ENCODE measurements at regions of chr5 and their contacts with region 1.

Region 1: DNA sequence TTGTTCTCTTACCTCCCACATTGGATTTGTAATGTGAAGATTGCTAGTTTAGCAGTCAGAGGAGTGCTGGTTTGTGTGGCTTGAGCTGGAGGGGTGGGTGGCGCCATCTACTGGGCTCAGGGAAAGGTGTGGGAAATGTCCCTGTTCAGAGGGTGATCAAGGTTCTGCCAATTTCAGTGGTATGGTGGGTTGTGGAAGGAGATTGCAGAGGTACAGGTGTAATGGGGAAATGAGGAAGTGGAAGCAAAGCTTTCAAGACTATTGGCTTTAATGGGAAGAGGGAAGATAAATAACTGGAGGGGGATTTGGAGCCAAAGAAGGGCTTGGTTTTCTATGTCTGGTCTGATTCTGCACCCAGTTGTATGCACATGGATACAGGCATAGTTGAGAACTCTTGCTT is 76.4 kb downstream of the OSMR start:
- DNase-seq: peak in 3 of 5 donors; percentile 20 to 40 (median 33)
- ATAC-seq: peak; percentile 51 to 68 (median 62)
- H3K4me3 ChIP-seq: no peak overlapping the region
- H3K27ac ChIP-seq: no peak overlapping the region
- H3K4me1 ChIP-seq: peaks cover 0 to 36% (median 1%) of the 10 kb centered on the region in 12 donors
- H3K27me3 ChIP-seq: no peaks in the 10 kb centered on the region
- CTCF ChIP-seq: peak; percentile 44 to 90 (median 68)
- POLR2A ChIP-seq: no peak

Region 2: GRCh38 chr5:38420691-38421390 is 501.4 kb before region 1 on chr5:
- intact Hi-C with region 1: loop called in 1 of 10 experiments (anchors 5 kb)
- DNase-seq: peak in 4 of 5 donors; percentile 29 to 55 (median 46)
- ATAC-seq: peak in 3 of 4 donors; percentile 55 to 76 (median 68)
- H3K4me3 ChIP-seq: no peak overlapping the region
- H3K27ac ChIP-seq: no peak overlapping the region
- H3K4me1 ChIP-seq: peaks cover 0 to 9% (median 0%) of the 10 kb centered on the region in 12 donors
- H3K27me3 ChIP-seq: peaks cover 0 to 2% (median 0%) of the 10 kb centered on the region in 9 donors
- CTCF ChIP-seq: peak; percentile 56 to 83 (median 68)
- POLR2A ChIP-seq: no peak

Region 3: DNA sequence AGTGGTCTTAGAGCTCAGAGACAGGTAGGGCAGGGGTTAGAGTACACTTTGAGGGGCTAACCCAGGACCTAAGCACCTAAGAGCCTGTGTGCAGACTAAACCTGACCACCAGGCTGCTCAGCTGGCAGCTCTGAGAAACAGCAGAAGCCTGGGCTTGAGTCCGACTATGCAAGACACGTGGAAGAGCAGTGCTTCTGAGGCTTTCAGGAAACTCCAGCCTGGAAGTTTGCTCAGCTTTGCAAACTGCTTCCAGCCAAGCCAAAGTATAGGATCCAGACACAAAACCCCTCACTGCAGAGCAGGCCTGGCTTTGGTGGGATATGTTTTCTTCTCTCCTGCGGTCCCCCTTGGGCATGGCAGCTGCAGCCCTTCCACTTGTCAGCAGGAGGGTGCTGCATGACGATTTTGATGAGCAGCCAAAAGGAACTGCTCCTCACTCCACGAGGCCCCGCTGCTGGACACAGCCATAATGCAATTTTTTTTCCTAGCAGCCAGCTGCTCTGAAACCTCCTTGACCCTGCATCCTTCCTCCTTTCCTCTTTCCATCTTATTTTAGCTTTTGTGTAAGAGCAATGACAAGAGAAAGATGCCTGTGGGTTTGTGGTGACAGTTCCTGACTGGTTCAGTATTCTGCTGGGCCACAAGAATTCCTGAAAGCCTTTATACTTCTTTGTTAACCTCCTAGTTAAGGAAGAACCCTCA is 488.9 kb before region 1 on chr5:
- intact Hi-C with region 1: loop called in 1 of 10 experiments (anchors 10 kb)
- DNase-seq: peak; percentile 63 to 80 (median 75)
- ATAC-seq: peak; percentile 77 to 88 (median 84)
- H3K4me3 ChIP-seq: no peak overlapping the region
- H3K27ac ChIP-seq: peak overlapping the region in 8 of 12 donors; percentile 0 to 64 (median 24)
- H3K4me1 ChIP-seq: peaks cover 3 to 35% (median 14%) of the 10 kb centered on the region in 12 donors
- H3K27me3 ChIP-seq: peaks cover 0 to 51% (median 0%) of the 10 kb centered on the region in 9 donors
- CTCF ChIP-seq: peak in 1 of 12 donors; percentile 7
- POLR2A ChIP-seq: no peak

Region 4: GRCh38 chr5:38831909-38832308 is 90.3 kb before region 1 on chr5:
- intact Hi-C with region 1: loop called in 8 of 10 experiments (anchors 2 to 10 kb)
- DNase-seq: no peak
- ATAC-seq: peak in 2 of 4 donors; percentile 26 to 53
- H3K4me3 ChIP-seq: no peak overlapping the region
- H3K27ac ChIP-seq: no peak overlapping the region
- H3K4me1 ChIP-seq: peaks cover 0 to 23% (median 12%) of the 10 kb centered on the region in 12 donors
- H3K27me3 ChIP-seq: no peaks in the 10 kb centered on the region
- CTCF ChIP-seq: peak in 10 of 12 donors; percentile 13 to 54 (median 40)
- POLR2A ChIP-seq: no peak

Region 5: GRCh38 chr5:38845526-38846378 is 76.4 kb before region 1 on chr5 and contains the start of gene OSMR:
- intact Hi-C with region 1: loop called in 1 of 10 experiments (anchors 5 kb)
- DNase-seq: peak; percentile 91 to 95 (median 93)
- ATAC-seq: peak; percentile 90 to 97 (median 96)
- H3K4me3 ChIP-seq: peak within 1 kb of the TSS; percentile 52 to 88 (median 74)
- H3K27ac ChIP-seq: peak within 1 kb of the TSS; percentile 87 to 96 (median 93)
- H3K4me1 ChIP-seq: peaks cover 0 to 43% (median 5%) of the 10 kb centered on the region in 12 donors
- H3K27me3 ChIP-seq: peaks cover 0 to 35% (median 4%) of the 10 kb centered on the region in 9 donors
- CTCF ChIP-seq: peak in 2 of 12 donors; percentile 8
- POLR2A ChIP-seq: peak in 1 of 2 donors; percentile 53
- total RNA-seq, gene OSMR: 8.1 to 39.2 (median 12.0) TPM

Region 6: GRCh38 chr5:38858839-38859238 is 63.4 kb before region 1 on chr5:
- intact Hi-C with region 1: no loop called
- DNase-seq: no peak
- ATAC-seq: no peak
- H3K4me3 ChIP-seq: no peak overlapping the region
- H3K27ac ChIP-seq: no peak overlapping the region
- H3K4me1 ChIP-seq: peaks cover 0 to 5% (median 0%) of the 10 kb centered on the region in 12 donors
- H3K27me3 ChIP-seq: no peaks in the 10 kb centered on the region
- CTCF ChIP-seq: no peak
- POLR2A ChIP-seq: no peak

Measured in heart left ventricle (tissue), 16 donors.